MCF 10A (cell line): ENCODE measurements at regions of chr6 and their contacts with region 1.

Region 1: GRCh38 chr6:72296375-72296774 is 325.5 kb upstream of the KCNQ5 start:
- DNase-seq: no peak
- H3K4me3 Mint-ChIP-seq: no peak overlapping the region
- H3K27ac Mint-ChIP-seq: no peak overlapping the region
- H3K4me1 Mint-ChIP-seq: no peaks in the 10 kb centered on the region
- H3K27me3 Mint-ChIP-seq: peaks cover 73% of the 10 kb centered on the region
- CTCF ChIP-seq: no peak

Region 2: DNA sequence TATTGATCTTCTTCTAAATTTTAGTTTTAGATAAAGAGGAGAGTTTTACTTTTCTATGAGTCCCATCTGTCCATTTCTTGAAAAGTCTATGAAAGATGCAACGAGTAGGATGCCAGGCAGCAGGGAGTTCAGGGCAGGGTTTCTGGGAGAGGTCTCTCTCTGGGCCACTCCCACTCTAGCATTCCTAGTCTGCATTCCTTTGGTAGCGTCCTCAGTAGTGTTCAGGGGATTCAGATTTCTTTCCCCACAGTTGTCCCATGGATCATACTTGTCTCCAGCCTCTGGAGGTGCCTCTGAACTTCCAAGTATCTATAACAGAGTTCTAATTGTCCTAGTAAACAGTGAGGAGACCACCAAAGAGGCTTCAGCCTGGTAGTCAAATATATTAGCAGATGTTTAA is 184.8 kb before region 1 on chr6:
- CTCF ChIA-PET with region 1: no interaction called
- POLR2A ChIA-PET with region 1: no interaction called
- intact Hi-C with region 1: no loop called
- DNase-seq: no peak
- H3K4me3 Mint-ChIP-seq: no peak overlapping the region
- H3K27ac Mint-ChIP-seq: no peak overlapping the region
- H3K4me1 Mint-ChIP-seq: no peaks in the 10 kb centered on the region
- H3K27me3 Mint-ChIP-seq: peaks cover 23% of the 10 kb centered on the region
- CTCF ChIP-seq: no peak

Region 3: GRCh38 chr6:72260489-72260888 is 35.9 kb before region 1 on chr6:
- CTCF ChIA-PET with region 1: no interaction called
- POLR2A ChIA-PET with region 1: no interaction called
- intact Hi-C with region 1: loop called (anchors 1 kb)
- DNase-seq: no peak
- H3K4me3 Mint-ChIP-seq: no peak overlapping the region
- H3K27ac Mint-ChIP-seq: no peak overlapping the region
- H3K4me1 Mint-ChIP-seq: no peaks in the 10 kb centered on the region
- H3K27me3 Mint-ChIP-seq: peaks cover 69% of the 10 kb centered on the region
- CTCF ChIP-seq: no peak